ENCODE measurements at regions of chr2 and their contacts with region 1.

Region 1: GRCh38 chr2:200963124-200963917 is at the start of gene ORC2:
- DNase-seq: peak; percentile 78
- ATAC-seq: peak; percentile 93
- H3K4me3 ChIP-seq: peak within 1 kb of the TSS; percentile 99
- H3K27ac ChIP-seq: peak within 1 kb of the TSS; percentile 67
- H3K4me1 ChIP-seq: peaks cover 7% of the 10 kb centered on the region; the same call in 1 of the 2 replicates
- H3K27me3 ChIP-seq: no peaks in the 10 kb centered on the region
- CTCF ChIP-seq: peak; percentile 58 to 73 (median 64)
- EP300 ChIP-seq: no peak
- POLR2A ChIP-seq: peak; percentile 94
- RAD21 ChIP-seq: peak; percentile 52
- polyA plus RNA-seq, gene ORC2: 6.1 to 6.7 TPM

Region 2: GRCh38 chr2:200479692-200480265 is 483.5 kb before region 1 on chr2:
- CTCF ChIA-PET with region 1: no interaction called
- POLR2A ChIA-PET with region 1: no interaction called
- RAD21 ChIA-PET with region 1: no interaction called
- SMC1A ChIA-PET with region 1: no interaction called
- in situ Hi-C with region 1: no loop called
- intact Hi-C with region 1: no loop called
- DNase-seq: no peak
- ATAC-seq: no peak
- H3K4me3 ChIP-seq: no peak overlapping the region
- H3K27ac ChIP-seq: no peak overlapping the region
- H3K4me1 ChIP-seq: no peaks in the 10 kb centered on the region
- H3K27me3 ChIP-seq: no peaks in the 10 kb centered on the region
- CTCF ChIP-seq: no peak
- EP300 ChIP-seq: no peak
- POLR2A ChIP-seq: no peak
- RAD21 ChIP-seq: no peak

Region 3: DNA sequence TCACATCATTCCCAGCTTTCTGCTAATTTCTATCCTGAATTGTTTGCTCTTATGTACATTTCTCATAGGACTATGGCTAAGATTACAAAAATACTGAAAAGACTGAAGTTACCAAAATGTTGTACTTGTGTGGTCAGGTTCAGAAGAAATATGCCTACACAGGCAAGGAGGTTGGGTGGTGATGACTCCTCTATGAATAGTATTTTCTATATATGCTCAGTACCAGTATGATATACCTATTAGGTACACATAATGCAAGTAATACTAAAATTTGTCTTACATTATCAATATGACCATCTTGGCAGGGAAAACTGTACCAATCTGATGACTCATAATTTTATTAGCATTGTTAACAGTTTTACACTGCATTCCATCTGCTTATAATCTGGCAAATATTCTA is 12.4 kb after region 1 on chr2:
- CTCF ChIA-PET with region 1: interaction called, 56 read pairs
- POLR2A ChIA-PET with region 1: interaction called, 6 read pairs
- RAD21 ChIA-PET with region 1: interaction called, 8 read pairs
- SMC1A ChIA-PET with region 1: interaction called, 14 read pairs
- in situ Hi-C with region 1: no loop called
- intact Hi-C with region 1: no loop called
- DNase-seq: no peak
- ATAC-seq: no peak
- H3K4me3 ChIP-seq: no peak overlapping the region
- H3K27ac ChIP-seq: no peak overlapping the region
- H3K4me1 ChIP-seq: no peaks in the 10 kb centered on the region
- H3K27me3 ChIP-seq: no peaks in the 10 kb centered on the region
- CTCF ChIP-seq: no peak
- EP300 ChIP-seq: no peak
- POLR2A ChIP-seq: no peak
- RAD21 ChIP-seq: no peak

Region 4: DNA sequence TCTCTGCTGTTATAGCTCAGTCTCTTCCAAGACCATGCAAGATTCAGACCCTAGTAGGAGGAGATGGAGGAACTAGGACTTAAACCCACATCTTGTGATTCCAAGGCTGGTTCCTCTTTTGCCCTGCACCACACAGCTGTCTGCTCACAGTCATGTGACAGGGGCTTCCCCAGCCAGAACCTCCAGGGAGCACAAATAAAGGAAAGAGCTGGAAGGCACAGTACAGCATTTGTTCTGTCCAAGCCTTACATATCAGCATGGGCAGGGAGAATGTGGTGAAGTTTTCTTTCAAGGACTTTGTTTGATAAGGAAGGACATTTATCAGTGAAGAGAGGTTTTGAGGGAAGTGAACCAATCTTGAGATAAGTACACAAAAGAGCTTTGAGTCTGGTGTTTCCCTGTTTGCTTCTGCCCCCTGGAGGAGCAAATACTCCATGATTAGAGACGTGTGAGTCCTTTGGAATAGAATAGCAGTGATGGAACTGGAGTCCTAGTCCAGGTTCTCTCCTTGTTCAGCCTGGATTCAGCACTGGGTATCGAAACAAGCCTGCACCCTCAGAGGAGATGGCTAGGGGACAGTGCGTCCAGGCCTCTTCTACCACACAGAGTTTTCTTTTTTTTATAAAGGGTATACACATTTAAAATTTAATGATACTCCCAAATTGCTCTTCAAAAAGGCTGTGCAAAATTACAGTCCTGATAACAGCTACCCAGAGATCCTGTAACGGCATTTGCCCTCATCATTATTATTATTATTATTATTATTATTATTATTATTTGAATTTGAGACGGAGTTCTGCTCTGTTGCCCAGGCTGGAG is 195.0 kb after region 1 on chr2:
- CTCF ChIA-PET with region 1: interaction called, 14 read pairs
- POLR2A ChIA-PET with region 1: no interaction called
- RAD21 ChIA-PET with region 1: interaction called, 17 read pairs
- SMC1A ChIA-PET with region 1: interaction called, 7 read pairs
- in situ Hi-C with region 1: no loop called
- intact Hi-C with region 1: no loop called
- DNase-seq: peak; percentile 77
- ATAC-seq: peak; percentile 98
- H3K4me3 ChIP-seq: no peak overlapping the region
- H3K27ac ChIP-seq: peak overlapping the region; percentile 35
- H3K4me1 ChIP-seq: peaks cover 14% of the 10 kb centered on the region
- H3K27me3 ChIP-seq: no peaks in the 10 kb centered on the region
- CTCF ChIP-seq: peak; percentile 62 to 76 (median 66)
- EP300 ChIP-seq: peak; percentile 59 to 70; a peak in 2 of 4 replicates
- POLR2A ChIP-seq: no peak
- RAD21 ChIP-seq: peak; percentile 77

Region 5: DNA sequence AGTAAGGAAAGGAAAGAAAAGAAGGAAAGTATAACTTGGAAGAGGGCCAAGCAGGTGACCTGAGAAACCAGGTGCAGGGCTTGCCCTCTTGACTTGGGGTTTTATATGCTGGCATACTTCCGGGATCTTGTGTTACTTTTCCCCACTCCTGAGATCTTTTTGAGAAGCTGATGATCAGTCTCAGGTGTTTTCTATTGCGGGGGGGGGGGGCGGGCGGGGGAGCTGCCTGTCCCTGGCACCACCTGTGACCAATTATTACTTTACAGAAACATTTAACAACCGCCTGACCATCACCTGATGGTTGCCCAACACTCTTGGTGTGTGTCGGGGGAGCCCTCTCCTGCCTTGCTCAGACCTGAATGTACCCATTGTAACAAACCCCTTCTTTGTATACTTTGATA is 212.8 kb after region 1 on chr2:
- CTCF ChIA-PET with region 1: interaction called, 14 read pairs
- POLR2A ChIA-PET with region 1: no interaction called
- RAD21 ChIA-PET with region 1: interaction called, 5 read pairs
- SMC1A ChIA-PET with region 1: interaction called, 6 read pairs
- in situ Hi-C with region 1: no loop called
- intact Hi-C with region 1: loop called (anchors 5 kb)
- DNase-seq: no peak
- ATAC-seq: no peak
- H3K4me3 ChIP-seq: no peak overlapping the region
- H3K27ac ChIP-seq: no peak overlapping the region
- H3K4me1 ChIP-seq: no peaks in the 10 kb centered on the region
- H3K27me3 ChIP-seq: no peaks in the 10 kb centered on the region
- CTCF ChIP-seq: no peak
- EP300 ChIP-seq: no peak
- POLR2A ChIP-seq: no peak
- RAD21 ChIP-seq: no peak

Region 6: DNA sequence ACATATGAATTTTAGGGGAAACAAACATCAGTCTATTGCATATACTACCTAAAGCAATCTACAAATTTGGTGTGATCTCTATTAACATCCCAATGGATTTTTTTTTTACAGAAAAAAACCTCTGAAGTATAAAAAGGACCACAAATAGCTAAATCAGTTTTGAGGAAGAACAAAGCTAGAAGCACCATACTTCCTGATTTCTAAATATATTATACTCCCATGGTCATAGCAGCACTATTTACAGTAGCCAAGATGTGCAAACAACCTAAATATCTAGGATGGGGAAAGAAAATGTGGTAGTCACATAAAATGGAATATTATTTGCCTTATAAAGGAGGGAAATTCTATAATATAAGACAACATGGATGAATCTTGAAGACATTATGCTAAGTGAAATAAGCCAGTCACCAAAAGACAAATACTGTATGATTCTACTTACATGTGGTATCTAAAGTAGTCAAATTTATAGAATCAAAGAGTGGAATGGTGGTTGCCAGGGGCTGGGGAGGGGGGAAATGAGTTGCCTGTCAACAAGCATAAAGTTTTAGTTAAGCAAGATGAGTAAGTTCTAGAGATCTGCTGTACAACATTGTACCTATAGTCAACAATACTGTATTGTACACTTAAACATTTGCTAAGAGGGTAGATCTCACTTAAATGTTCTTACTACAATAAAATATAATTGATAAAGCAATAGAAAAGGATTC is 279.4 kb after region 1 on chr2:
- CTCF ChIA-PET with region 1: no interaction called
- POLR2A ChIA-PET with region 1: no interaction called
- RAD21 ChIA-PET with region 1: no interaction called
- SMC1A ChIA-PET with region 1: no interaction called
- in situ Hi-C with region 1: no loop called
- intact Hi-C with region 1: no loop called
- DNase-seq: no peak
- ATAC-seq: no peak
- H3K4me3 ChIP-seq: no peak overlapping the region
- H3K27ac ChIP-seq: no peak overlapping the region
- H3K4me1 ChIP-seq: no peaks in the 10 kb centered on the region
- H3K27me3 ChIP-seq: no peaks in the 10 kb centered on the region
- CTCF ChIP-seq: no peak
- EP300 ChIP-seq: no peak
- POLR2A ChIP-seq: no peak
- RAD21 ChIP-seq: no peak

Measured in GM12878 (cell line).